HepG2 (cell line): ENCODE measurements at regions of chr9 and their contacts with region 1.

Region 1: GRCh38 chr9:11319538-11319937 is 706.7 kb upstream of the PTPRD start:
- DNase-seq: no peak
- ATAC-seq: no peak
- H3K4me3 ChIP-seq: no peak overlapping the region
- H3K27ac ChIP-seq: no peak overlapping the region
- H3K4me1 ChIP-seq: no peaks in the 10 kb centered on the region
- H3K27me3 ChIP-seq: no peaks in the 10 kb centered on the region
- CTCF ChIP-seq: 0 out of 2 replicates have a peak, but pooled peaks have one; percentile 20
- EP300 ChIP-seq: no peak
- POLR2A ChIP-seq: no peak
- RAD21 ChIP-seq: no peak

Region 2: GRCh38 chr9:10366171-10366779 is 953.3 kb before region 1 on chr9:
- CTCF ChIA-PET with region 1: no interaction called
- POLR2A ChIA-PET with region 1: no interaction called
- in situ Hi-C with region 1: no loop called
- intact Hi-C with region 1: loop called (anchors 1 kb)
- DNase-seq: peak; percentile 32
- ATAC-seq: peak; percentile 89
- H3K4me3 ChIP-seq: no peak overlapping the region
- H3K27ac ChIP-seq: no peak overlapping the region
- H3K4me1 ChIP-seq: no peaks in the 10 kb centered on the region
- H3K27me3 ChIP-seq: no peaks in the 10 kb centered on the region
- CTCF ChIP-seq: peak; percentile 76
- EP300 ChIP-seq: no peak
- POLR2A ChIP-seq: no peak
- RAD21 ChIP-seq: 0 out of 2 replicates have a peak, but pooled peaks have one; percentile 19

Region 3: DNA sequence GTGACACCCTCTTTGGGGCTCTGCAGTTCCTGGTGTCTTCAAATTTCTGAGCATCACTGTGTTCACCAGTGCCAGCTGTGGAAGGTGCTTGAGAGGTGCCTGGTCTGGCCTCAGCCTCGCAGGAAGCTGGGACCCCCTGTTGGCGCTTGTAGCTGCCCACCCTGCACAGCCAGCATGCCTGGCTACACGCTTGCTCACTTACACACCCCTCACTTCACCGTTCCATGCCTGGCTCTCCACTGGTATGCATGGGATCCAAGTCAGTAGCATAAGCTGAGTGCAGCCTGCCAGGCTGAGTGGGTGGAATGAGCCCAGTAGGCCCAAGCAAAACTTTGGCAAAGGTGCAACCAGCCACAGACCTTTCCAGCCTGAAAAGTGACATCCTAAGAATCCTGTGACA is 94.7 kb after region 1 on chr9:
- CTCF ChIA-PET with region 1: no interaction called
- POLR2A ChIA-PET with region 1: no interaction called
- in situ Hi-C with region 1: no loop called
- intact Hi-C with region 1: no loop called
- DNase-seq: no peak
- ATAC-seq: no peak
- H3K4me3 ChIP-seq: no peak overlapping the region
- H3K27ac ChIP-seq: no peak overlapping the region
- H3K4me1 ChIP-seq: no peaks in the 10 kb centered on the region
- H3K27me3 ChIP-seq: no peaks in the 10 kb centered on the region
- CTCF ChIP-seq: no peak
- EP300 ChIP-seq: no peak
- POLR2A ChIP-seq: no peak
- RAD21 ChIP-seq: no peak